Activated CD8-positive, alpha-beta memory T cell treated with anti-CD3 and anti-CD28 coated beads, Interleukin-2, amount 10 ng/mL, durations not matched to agents 7 days and 5 days (primary cell): ENCODE measurements at regions of chr6 and their contacts with region 1.

Region 1: GRCh38 chr6:46221222-46221793 is 50.5 kb upstream of the ENPP5 start:
- DNase-seq: no peak
- ATAC-seq: peak; percentile 77
- H3K4me3 Mint-ChIP-seq: no peak overlapping the region
- H3K27ac Mint-ChIP-seq: no peak overlapping the region
- H3K4me1 Mint-ChIP-seq: peaks cover 7% of the 10 kb centered on the region
- H3K27me3 Mint-ChIP-seq: peaks cover 2% of the 10 kb centered on the region

Region 2: DNA sequence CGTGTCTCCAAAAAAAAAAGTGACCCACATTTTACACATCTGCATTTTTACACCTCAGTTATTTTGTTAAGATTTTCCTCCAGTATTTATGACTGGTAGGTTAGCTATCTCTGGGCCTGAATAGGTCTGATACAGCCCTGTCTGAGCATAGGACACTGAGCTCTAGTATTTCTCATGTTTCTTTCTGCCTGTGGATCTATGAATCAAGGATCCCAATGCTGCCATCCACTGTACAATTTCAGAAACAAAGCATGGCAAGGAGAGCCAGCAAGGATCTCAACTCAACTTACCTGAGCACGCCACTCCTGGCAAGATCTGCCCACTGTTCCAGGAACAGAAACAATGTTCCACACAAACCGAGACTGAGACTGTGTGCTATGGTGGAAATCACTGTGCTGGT is 14.1 kb before region 1 on chr6:
- CTCF ChIA-PET with region 1: interaction called, 10 read pairs
- DNase-seq: no peak
- ATAC-seq: no peak
- H3K4me3 Mint-ChIP-seq: no peak overlapping the region
- H3K27ac Mint-ChIP-seq: no peak overlapping the region
- H3K4me1 Mint-ChIP-seq: no peaks in the 10 kb centered on the region
- H3K27me3 Mint-ChIP-seq: peaks cover 2% of the 10 kb centered on the region

Region 3: GRCh38 chr6:46410334-46410953 is 189.1 kb after region 1 on chr6:
- CTCF ChIA-PET with region 1: interaction called, 42 read pairs
- DNase-seq: no peak
- ATAC-seq: no peak
- H3K4me3 Mint-ChIP-seq: no peak overlapping the region
- H3K27ac Mint-ChIP-seq: no peak overlapping the region
- H3K4me1 Mint-ChIP-seq: peaks cover 3% of the 10 kb centered on the region
- H3K27me3 Mint-ChIP-seq: peaks cover 3% of the 10 kb centered on the region